ENCODE measurements at regions of chr12 and their contacts with region 1.

Region 1: DNA sequence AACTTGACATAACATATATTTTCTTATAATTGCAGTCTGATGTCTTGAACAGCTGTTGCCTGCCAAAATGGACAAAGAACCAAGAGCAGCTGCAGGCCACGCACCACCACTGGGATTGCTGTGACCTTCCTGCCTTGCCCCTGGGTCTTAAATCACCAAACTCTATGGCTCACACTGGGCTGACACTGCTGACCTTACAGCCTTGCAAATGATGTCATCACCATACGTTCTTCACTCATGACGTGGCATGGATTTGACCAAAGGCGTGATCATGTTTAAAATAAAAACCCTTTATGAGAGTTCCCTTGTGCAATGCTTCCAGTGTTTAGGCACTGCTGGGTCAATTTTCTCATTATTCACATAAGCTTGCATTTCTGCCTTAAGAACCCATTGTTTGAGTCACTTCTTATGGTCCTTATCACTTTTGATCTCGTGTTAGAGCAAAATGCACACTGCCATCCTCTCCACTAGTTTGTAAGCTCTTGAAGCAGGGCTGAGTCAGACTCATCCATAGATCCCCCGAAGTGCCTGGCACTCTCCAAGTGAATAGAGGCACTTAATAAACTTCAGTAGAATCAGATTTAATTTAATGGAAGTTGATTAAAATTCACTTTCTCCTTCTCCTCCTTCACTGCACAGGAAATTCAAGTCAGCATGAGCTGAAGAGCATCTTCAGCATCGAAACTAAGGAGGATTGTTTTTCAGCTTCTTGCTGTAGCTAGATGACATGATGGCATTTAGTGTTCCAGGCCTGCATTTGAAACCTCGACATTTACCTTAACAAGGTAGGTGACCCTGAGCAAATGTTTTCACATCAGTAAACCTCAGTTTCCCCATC is 132.4 kb upstream of the PZP start:
- DNase-seq: no peak
- H3K4me3 Mint-ChIP-seq: no peak overlapping the region
- H3K27ac Mint-ChIP-seq: no peak overlapping the region
- H3K4me1 Mint-ChIP-seq: peaks cover 22% of the 10 kb centered on the region
- H3K27me3 Mint-ChIP-seq: no peaks in the 10 kb centered on the region

Region 2: GRCh38 chr12:9367201-9367600 is 26.6 kb after region 1 on chr12:
- CTCF ChIA-PET with region 1: no interaction called
- intact Hi-C with region 1: loop called (anchors 2 kb)
- DNase-seq: no peak
- H3K4me3 Mint-ChIP-seq: no peak overlapping the region
- H3K27ac Mint-ChIP-seq: no peak overlapping the region
- H3K4me1 Mint-ChIP-seq: peaks cover 15% of the 10 kb centered on the region
- H3K27me3 Mint-ChIP-seq: no peaks in the 10 kb centered on the region

Region 3: GRCh38 chr12:9387450-9387849 is 46.8 kb after region 1 on chr12:
- CTCF ChIA-PET with region 1: no interaction called
- intact Hi-C with region 1: loop called (anchors 5 kb)
- DNase-seq: no peak
- H3K4me3 Mint-ChIP-seq: no peak overlapping the region
- H3K27ac Mint-ChIP-seq: no peak overlapping the region
- H3K4me1 Mint-ChIP-seq: peaks cover 17% of the 10 kb centered on the region
- H3K27me3 Mint-ChIP-seq: no peaks in the 10 kb centered on the region